SK-N-SH (cell line): ENCODE measurements at regions of chr2 and their contacts with region 1.

Region 1: DNA sequence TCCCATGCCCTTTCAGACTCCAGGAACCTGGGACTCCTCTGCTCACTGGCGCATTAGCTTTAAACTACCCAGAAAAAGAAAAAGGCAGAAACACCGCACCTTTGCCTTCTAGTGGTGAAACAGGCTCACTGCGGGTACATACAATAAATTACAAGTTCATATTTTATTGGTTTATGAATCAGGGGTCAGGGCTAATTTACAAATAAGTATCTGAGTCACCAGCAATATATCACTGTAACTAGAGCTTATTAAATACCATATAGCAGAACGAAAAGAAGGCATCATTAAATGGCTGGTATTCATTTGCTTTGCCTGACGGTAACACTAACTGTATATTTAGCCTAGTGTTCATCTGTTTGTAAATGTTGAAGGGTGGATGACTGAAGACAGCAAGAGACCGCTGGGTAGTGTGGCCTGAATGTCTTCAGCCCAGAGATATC is 26.9 kb upstream of the DTNB start:
- DNase-seq: peak; percentile 76
- H3K4me3 ChIP-seq: no peak overlapping the region
- H3K27ac ChIP-seq: no peak overlapping the region
- H3K4me1 ChIP-seq: peaks cover 3 to 6% of the 10 kb centered on the region in 2 experiments; a peak in 2 of 4 replicates
- H3K27me3 ChIP-seq: no peaks in the 10 kb centered on the region
- CTCF ChIP-seq: peak; percentile 91
- EP300 ChIP-seq: no peak
- RAD21 ChIP-seq: peak; percentile 81

Region 2: GRCh38 chr2:25597881-25598280 is 102.4 kb before region 1 on chr2:
- CTCF ChIA-PET with region 1: interaction called, 18 read pairs
- POLR2A ChIA-PET with region 1: no interaction called
- DNase-seq: no peak
- H3K4me3 ChIP-seq: no peak overlapping the region
- H3K27ac ChIP-seq: no peak overlapping the region
- H3K4me1 ChIP-seq: peaks cover 0 to 7% of the 10 kb centered on the region in 2 experiments; a peak in 2 of 4 replicates
- H3K27me3 ChIP-seq: no peaks in the 10 kb centered on the region
- CTCF ChIP-seq: no peak
- EP300 ChIP-seq: no peak
- RAD21 ChIP-seq: no peak

Region 3: GRCh38 chr2:25618642-25619037 is 81.6 kb before region 1 on chr2:
- CTCF ChIA-PET with region 1: interaction called, 10 read pairs
- POLR2A ChIA-PET with region 1: no interaction called
- DNase-seq: no peak
- H3K4me3 ChIP-seq: peak overlapping the region in 1 of 2 experiments; percentile 49; a peak in 1 of 4 replicates
- H3K27ac ChIP-seq: peak overlapping the region; percentile 73 to 99; a peak in 3 of 4 replicates
- H3K4me1 ChIP-seq: peaks cover 0 to 16% of the 10 kb centered on the region in 2 experiments; a peak in 3 of 4 replicates
- H3K27me3 ChIP-seq: no peaks in the 10 kb centered on the region
- CTCF ChIP-seq: no peak
- EP300 ChIP-seq: peak in 1 of 2 experiments; percentile 71; a peak in 1 of 4 replicates
- RAD21 ChIP-seq: no peak

Region 4: DNA sequence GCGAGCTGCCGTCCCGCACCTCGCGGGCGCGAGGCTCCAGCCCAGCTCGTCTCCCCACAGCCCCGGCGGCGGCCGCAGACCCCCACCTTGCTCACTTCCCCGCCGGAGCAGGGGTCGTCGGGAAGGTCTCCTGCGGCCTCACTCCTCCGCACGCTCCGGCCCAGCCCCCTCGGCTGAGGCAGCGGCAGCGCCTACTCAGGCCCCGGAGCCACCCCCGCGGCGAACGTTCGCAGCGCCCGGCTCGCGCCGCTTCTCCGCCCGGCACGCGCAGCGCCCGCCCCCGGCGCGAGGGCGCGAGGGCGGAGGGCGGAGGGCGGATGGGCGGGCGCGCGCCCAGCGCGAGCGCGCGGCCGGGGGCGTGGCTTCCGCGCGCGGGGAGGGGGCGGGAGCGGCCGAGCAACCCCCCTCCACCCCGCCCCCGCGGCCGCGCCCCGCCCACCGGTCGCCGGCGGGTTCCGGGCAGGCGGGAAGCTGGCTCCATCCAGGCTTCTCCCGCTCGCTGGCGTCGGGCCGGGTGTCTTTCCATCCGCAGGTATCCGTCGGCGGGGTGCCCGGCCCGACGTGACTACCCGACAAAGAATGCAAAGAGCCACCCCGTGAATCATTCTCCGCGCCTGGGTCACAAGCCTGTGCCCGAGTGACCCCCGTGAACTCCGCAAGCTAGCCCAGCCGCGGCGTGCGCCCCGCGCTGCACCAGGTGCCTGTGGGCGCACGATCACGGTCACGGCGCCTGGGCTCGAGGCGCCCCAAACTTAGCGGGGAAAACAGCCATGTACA is 26.8 kb before region 1 on chr2 and contains the start of gene DTNB:
- CTCF ChIA-PET with region 1: interaction called, 58 read pairs
- POLR2A ChIA-PET with region 1: no interaction called
- DNase-seq: peak; percentile 100
- H3K4me3 ChIP-seq: peak within 1 kb of the TSS; percentile 86 to 91
- H3K27ac ChIP-seq: peak within 1 kb of the TSS in 1 of 2 experiments; percentile 78; a peak in 3 of 4 replicates
- H3K4me1 ChIP-seq: peaks cover 9 to 16% of the 10 kb centered on the region in 2 experiments; a peak in 3 of 4 replicates
- H3K27me3 ChIP-seq: no peaks in the 10 kb centered on the region
- CTCF ChIP-seq: no peak
- EP300 ChIP-seq: no peak
- RAD21 ChIP-seq: no peak
- polyA plus RNA-seq, gene DTNB: 14.9 and 15.3 TPM in 2 replicates

Region 5: DNA sequence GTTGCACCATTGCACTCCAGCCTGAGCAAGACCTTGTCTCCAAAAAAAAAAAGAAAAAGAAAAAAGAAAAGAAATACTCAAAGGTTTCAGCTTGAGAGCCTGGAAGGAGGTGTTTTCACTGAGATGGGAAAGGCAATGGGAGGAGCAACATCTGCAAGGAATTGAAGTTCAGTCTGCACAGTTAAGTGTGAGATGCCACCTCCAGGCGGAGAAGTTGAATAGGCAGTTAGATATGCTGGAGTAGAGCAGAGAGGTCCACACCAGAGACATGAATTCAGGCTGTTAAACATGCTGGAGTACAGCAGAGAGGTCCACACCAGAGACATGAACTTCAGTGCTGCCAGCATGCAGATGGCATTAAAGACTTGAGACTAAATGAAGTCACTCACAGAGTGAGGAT is 14.5 kb after region 1 on chr2:
- CTCF ChIA-PET with region 1: interaction called, 172 read pairs
- POLR2A ChIA-PET with region 1: no interaction called
- DNase-seq: no peak
- H3K4me3 ChIP-seq: no peak overlapping the region
- H3K27ac ChIP-seq: no peak overlapping the region
- H3K4me1 ChIP-seq: peaks cover 0 to 3% of the 10 kb centered on the region in 2 experiments; a peak in 1 of 4 replicates
- H3K27me3 ChIP-seq: no peaks in the 10 kb centered on the region; the same call in 1 of the 2 replicates
- CTCF ChIP-seq: no peak
- EP300 ChIP-seq: no peak
- RAD21 ChIP-seq: no peak; the same call in 1 of the 2 replicates